ENCODE measurements at regions of chr10 and their contacts with region 1.

Region 1: DNA sequence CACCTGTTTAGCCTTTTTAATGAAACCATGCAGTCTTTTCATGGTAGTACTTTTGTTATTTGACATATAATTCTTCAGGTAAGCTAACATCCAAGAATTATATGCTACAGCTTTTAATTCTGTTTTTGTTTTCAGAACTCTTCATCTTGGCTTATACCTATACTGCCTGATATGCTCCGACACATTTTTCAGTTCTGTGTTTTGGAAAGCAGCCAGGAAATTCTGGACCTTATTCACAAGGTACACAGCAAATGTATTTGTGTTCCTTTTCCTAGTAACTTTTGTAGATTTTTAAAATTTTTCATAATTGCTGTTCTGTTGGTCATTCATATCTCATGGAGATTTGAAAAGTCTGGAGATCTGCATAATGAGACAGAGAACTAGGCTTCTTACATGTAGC is 56.7 kb downstream of the BTAF1 start:
- DNase-seq: no peak
- H3K4me3 ChIP-seq: no peak overlapping the region
- H3K27ac ChIP-seq: no peak overlapping the region
- H3K4me1 ChIP-seq: no peaks in the 10 kb centered on the region
- H3K27me3 ChIP-seq: no peaks in the 10 kb centered on the region
- CTCF ChIP-seq: no peak

Region 2: DNA sequence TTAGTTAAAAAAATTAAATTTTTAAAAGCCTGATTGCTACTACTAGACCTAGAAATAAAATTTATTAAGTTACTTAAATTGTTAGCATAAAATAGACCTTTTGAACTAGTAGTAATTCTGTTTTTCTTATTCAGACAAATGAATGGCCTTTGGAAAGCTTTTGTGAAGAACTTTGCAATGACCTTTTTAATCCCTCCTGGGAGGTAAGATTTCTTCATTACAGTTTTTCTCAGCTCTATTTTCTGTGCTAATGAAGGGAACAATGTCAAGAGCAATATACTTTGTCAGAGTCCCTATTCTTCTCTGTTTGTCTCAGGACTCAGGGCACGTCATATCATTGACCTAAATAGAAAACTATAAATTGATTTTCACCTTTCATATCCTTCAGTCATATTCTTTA is 23.2 kb before region 1 on chr10:
- CTCF ChIA-PET with region 1: no interaction called
- POLR2A ChIA-PET with region 1: interaction called, 13 read pairs
- intact Hi-C with region 1: no loop called
- DNase-seq: no peak
- H3K4me3 ChIP-seq: no peak overlapping the region
- H3K27ac ChIP-seq: no peak overlapping the region
- H3K4me1 ChIP-seq: peaks cover 16% of the 10 kb centered on the region
- H3K27me3 ChIP-seq: no peaks in the 10 kb centered on the region
- CTCF ChIP-seq: no peak

Region 3: GRCh38 chr10:92103376-92104090 is 123.2 kb after region 1 on chr10:
- CTCF ChIA-PET with region 1: no interaction called
- POLR2A ChIA-PET with region 1: no interaction called
- intact Hi-C with region 1: no loop called
- DNase-seq: no peak
- H3K4me3 ChIP-seq: no peak overlapping the region
- H3K27ac ChIP-seq: no peak overlapping the region
- H3K4me1 ChIP-seq: peaks cover 19% of the 10 kb centered on the region
- H3K27me3 ChIP-seq: no peaks in the 10 kb centered on the region
- CTCF ChIP-seq: no peak

Region 4: GRCh38 chr10:92395271-92395670 is 415.0 kb after region 1 on chr10:
- CTCF ChIA-PET with region 1: interaction called, 11 read pairs
- POLR2A ChIA-PET with region 1: no interaction called
- intact Hi-C with region 1: no loop called
- DNase-seq: no peak
- H3K4me3 ChIP-seq: no peak overlapping the region
- H3K27ac ChIP-seq: no peak overlapping the region
- H3K4me1 ChIP-seq: no peaks in the 10 kb centered on the region
- H3K27me3 ChIP-seq: no peaks in the 10 kb centered on the region
- CTCF ChIP-seq: no peak

Region 5: GRCh38 chr10:92486637-92487036 is 506.3 kb after region 1 on chr10:
- CTCF ChIA-PET with region 1: no interaction called
- POLR2A ChIA-PET with region 1: no interaction called
- intact Hi-C with region 1: no loop called
- DNase-seq: no peak
- H3K4me3 ChIP-seq: no peak overlapping the region
- H3K27ac ChIP-seq: no peak overlapping the region
- H3K4me1 ChIP-seq: no peaks in the 10 kb centered on the region
- H3K27me3 ChIP-seq: no peaks in the 10 kb centered on the region
- CTCF ChIP-seq: no peak

Measured in PC-9 (cell line).